Mammary epithelial cell (primary cell): ENCODE measurements at regions of chr11 and their contacts with region 1.

Region 1: DNA sequence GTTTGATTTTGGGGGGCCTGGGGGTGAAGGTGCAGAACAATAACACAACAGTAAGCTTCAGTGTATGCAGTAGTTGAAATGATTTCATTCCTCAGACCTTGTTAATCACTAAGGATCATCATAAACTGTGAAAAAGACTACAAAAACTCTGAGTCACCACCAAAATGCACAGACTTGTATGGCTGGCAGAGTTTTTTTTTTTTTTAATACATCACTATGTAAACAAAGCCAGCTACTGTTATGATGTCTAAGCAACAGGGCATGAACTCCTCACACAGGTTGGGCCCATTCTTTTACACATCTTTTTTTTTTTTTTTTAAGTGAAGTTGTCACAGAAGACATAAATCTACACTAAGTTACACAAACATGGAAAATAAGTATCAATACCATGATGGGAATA is 311.9 kb downstream of the GUCY1A2 start:
- DNase-seq: peak; percentile 86
- H3K4me3 ChIP-seq: no peak overlapping the region
- H3K27ac ChIP-seq: peak overlapping the region; percentile 40
- H3K4me1 ChIP-seq: peaks cover 4% of the 10 kb centered on the region
- H3K27me3 ChIP-seq: peaks cover 1% of the 10 kb centered on the region
- CTCF ChIP-seq: no peak

Region 2: GRCh38 chr11:106242718-106243415 is 463.5 kb before region 1 on chr11:
- CTCF ChIA-PET with region 1: no interaction called
- dilution Hi-C with region 1: no loop called
- in situ Hi-C with region 1: no loop called
- intact Hi-C with region 1: no loop called
- DNase-seq: no peak
- H3K4me3 ChIP-seq: no peak overlapping the region
- H3K27ac ChIP-seq: no peak overlapping the region
- H3K4me1 ChIP-seq: no peaks in the 10 kb centered on the region
- H3K27me3 ChIP-seq: no peaks in the 10 kb centered on the region
- CTCF ChIP-seq: no peak

Region 3: GRCh38 chr11:106276859-106277436 is 429.4 kb before region 1 on chr11:
- CTCF ChIA-PET with region 1: no interaction called
- dilution Hi-C with region 1: no loop called
- in situ Hi-C with region 1: no loop called
- intact Hi-C with region 1: loop called (anchors 5 kb)
- DNase-seq: no peak
- H3K4me3 ChIP-seq: no peak overlapping the region
- H3K27ac ChIP-seq: no peak overlapping the region
- H3K4me1 ChIP-seq: peaks cover 11% of the 10 kb centered on the region
- H3K27me3 ChIP-seq: no peaks in the 10 kb centered on the region
- CTCF ChIP-seq: peak; percentile 22 to 58

Region 4: GRCh38 chr11:106608677-106609076 is 97.7 kb before region 1 on chr11:
- CTCF ChIA-PET with region 1: interaction called, 18 read pairs
- dilution Hi-C with region 1: no loop called
- in situ Hi-C with region 1: no loop called
- intact Hi-C with region 1: no loop called
- DNase-seq: peak; percentile 51
- H3K4me3 ChIP-seq: no peak overlapping the region
- H3K27ac ChIP-seq: no peak overlapping the region
- H3K4me1 ChIP-seq: peaks cover 8% of the 10 kb centered on the region
- H3K27me3 ChIP-seq: no peaks in the 10 kb centered on the region
- CTCF ChIP-seq: no peak